H1 (cell line): ENCODE measurements at regions of chr11 and their contacts with region 1.

Region 1: DNA sequence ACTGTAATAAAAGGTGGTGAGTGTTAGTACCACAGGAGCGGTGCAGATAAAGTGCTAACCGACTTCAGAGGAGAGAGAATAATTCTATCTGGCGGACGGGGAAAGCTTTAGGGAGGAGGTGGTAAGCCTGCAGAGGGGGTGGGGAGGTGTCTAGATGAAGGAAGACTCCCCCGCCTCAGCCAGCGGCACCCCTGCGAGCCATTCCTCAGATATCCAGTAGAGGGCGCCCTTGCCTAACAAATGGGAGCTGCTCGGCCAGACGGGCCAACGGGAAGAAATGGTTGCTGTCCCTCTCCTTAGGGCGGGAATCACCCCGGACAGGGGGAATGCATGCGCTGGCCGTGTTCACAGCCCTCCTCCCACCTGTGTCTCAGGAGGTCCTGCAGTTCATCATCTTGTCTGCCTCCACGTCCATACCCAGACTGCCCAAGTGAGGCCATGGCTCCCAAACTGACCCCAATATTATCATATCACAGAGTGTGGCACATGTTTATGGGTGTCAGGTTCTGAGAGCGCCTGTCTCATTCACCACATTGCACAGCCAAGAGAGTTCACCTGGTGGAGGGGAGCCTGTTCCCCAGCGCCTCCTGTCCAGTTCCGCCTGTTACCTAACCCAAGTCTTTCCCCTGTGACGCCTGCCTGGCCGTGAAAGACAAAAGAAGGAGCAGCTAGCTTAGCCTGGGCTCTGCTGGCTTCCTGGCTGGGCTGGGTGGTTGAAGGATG is 85.5 kb downstream of the ST3GAL4 start:
- DNase-seq: peak; percentile 64 to 98
- H3K4me3 ChIP-seq: peak overlapping the region in 1 of 4 experiments; percentile 13; a peak in 1 of 8 replicates
- H3K27ac ChIP-seq: no peak overlapping the region
- H3K4me1 ChIP-seq: peaks cover 4 to 11% (median 8%) of the 10 kb centered on the region in 4 experiments; a peak in 5 of 7 replicates
- H3K27me3 ChIP-seq: no peaks in the 10 kb centered on the region
- CTCF ChIP-seq: peak; percentile 91 to 96 (median 93)
- EP300 ChIP-seq: no peak
- POLR2A ChIP-seq: no peak
- RAD21 ChIP-seq: peak; percentile 100

Region 2: DNA sequence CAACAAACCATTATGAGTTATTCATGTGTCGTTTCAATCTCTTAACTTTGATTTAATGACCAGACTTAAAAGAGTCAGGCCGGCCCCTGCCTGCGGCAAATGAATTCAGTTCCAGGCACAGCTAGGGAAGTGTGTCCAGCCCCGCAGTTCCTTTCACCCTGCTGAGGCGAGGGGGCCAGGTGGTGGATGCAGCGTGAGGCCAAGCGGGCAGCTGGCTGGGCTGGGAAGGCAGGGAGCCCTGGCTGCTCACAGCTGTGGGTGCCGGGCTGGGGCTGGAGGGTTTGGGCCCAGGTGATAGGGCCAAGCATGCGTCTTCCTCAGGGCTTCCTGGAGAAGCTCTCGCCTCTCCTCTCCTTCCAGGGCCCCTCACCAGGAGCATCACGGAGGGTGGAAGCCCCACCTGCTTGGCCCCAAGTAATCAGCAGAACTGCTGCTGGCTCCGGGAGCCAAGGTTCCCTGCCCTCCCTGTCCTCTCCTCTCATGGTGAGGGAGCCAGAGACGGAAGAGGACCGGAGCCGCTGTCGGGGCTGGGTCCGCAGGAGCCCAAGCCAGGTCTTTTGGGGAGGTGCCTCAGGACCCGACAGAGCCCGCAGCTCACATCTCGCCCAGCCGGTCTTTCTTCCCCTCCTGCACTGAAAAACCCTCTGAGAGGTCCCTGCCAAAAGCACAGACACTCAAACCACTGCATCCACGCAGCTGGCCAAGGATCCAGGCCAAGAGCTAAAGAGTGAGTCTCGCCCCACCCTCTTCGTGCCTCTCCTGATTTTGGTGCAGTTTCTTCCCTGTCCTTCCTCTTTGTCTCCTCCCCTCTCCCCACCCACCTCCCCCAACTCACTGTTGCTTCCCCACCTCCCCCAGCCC is 11.5 kb after region 1 on chr11:
- CTCF ChIA-PET with region 1: interaction called, 17 read pairs
- POLR2A ChIA-PET with region 1: no interaction called
- DNase-seq: no peak
- H3K4me3 ChIP-seq: no peak overlapping the region
- H3K27ac ChIP-seq: no peak overlapping the region
- H3K4me1 ChIP-seq: peaks cover 0 to 6% (median 0%) of the 10 kb centered on the region in 4 experiments; a peak in 1 of 7 replicates
- H3K27me3 ChIP-seq: no peaks in the 10 kb centered on the region
- CTCF ChIP-seq: no peak
- EP300 ChIP-seq: no peak
- POLR2A ChIP-seq: no peak
- RAD21 ChIP-seq: no peak

Region 3: GRCh38 chr11:126465573-126466188 is 24.7 kb after region 1 on chr11:
- CTCF ChIA-PET with region 1: interaction called, 12 read pairs
- POLR2A ChIA-PET with region 1: no interaction called
- DNase-seq: no peak
- H3K4me3 ChIP-seq: no peak overlapping the region
- H3K27ac ChIP-seq: no peak overlapping the region
- H3K4me1 ChIP-seq: peaks cover 0 to 4% (median under 1%) of the 10 kb centered on the region in 4 experiments; a peak in 3 of 7 replicates
- H3K27me3 ChIP-seq: no peaks in the 10 kb centered on the region
- CTCF ChIP-seq: no peak
- EP300 ChIP-seq: no peak
- POLR2A ChIP-seq: no peak
- RAD21 ChIP-seq: no peak

Region 4: GRCh38 chr11:126489836-126490660 is 49.1 kb after region 1 on chr11:
- CTCF ChIA-PET with region 1: interaction called, 21 read pairs
- POLR2A ChIA-PET with region 1: interaction called, 3 read pairs
- DNase-seq: no peak
- H3K4me3 ChIP-seq: no peak overlapping the region
- H3K27ac ChIP-seq: no peak overlapping the region
- H3K4me1 ChIP-seq: peaks cover 0 to 17% (median 6%) of the 10 kb centered on the region in 4 experiments; a peak in 6 of 7 replicates
- H3K27me3 ChIP-seq: no peaks in the 10 kb centered on the region
- CTCF ChIP-seq: no peak
- EP300 ChIP-seq: no peak
- POLR2A ChIP-seq: no peak
- RAD21 ChIP-seq: no peak

Region 5: DNA sequence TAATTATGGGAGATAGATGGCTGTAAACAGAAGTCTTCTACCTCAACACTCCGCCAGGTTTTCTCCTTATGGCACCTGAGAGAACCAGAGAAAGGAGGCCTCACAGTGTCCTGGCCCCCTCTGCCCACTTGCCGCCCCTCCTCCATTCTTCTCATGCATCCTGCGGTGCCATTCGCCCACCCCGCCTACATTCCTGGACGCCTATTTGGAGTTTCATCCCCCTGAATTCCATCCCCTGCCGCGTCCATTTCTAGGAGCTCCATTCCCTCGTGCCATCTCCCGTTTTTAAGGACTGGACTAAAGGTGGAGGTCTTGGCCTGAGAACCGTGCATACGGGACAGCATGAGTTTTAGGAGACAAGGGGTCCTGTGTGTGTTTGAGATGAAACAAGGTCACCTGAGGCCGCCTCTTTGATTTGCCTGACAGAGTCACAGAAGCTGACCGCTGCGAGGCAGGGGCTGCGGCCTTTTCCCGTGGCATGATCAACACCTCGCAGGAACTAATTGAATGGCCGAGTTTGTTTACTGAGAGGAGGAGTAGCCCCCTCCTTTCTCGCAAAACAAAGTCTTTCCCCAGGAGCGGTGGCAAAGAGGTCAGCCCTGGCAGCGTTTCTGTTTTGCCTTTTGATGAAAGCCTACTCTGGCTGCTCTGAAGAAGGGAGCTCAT is 160.7 kb after region 1 on chr11:
- CTCF ChIA-PET with region 1: interaction called, 14 read pairs
- POLR2A ChIA-PET with region 1: no interaction called
- DNase-seq: no peak
- H3K4me3 ChIP-seq: peak overlapping the region in 2 of 4 experiments; percentile 16 to 32; a peak in 3 of 8 replicates
- H3K27ac ChIP-seq: no peak overlapping the region
- H3K4me1 ChIP-seq: peaks cover 7 to 13% (median 9%) of the 10 kb centered on the region in 4 experiments
- H3K27me3 ChIP-seq: no peaks in the 10 kb centered on the region; a peak in 4 of 7 replicates
- CTCF ChIP-seq: no peak
- EP300 ChIP-seq: no peak
- POLR2A ChIP-seq: no peak
- RAD21 ChIP-seq: no peak